Activated B cell treated with CpG ODN at 0.5 μM for 24 hours (primary cell): ENCODE measurements at regions of chr17 and their contacts with region 1.

Region 1: DNA sequence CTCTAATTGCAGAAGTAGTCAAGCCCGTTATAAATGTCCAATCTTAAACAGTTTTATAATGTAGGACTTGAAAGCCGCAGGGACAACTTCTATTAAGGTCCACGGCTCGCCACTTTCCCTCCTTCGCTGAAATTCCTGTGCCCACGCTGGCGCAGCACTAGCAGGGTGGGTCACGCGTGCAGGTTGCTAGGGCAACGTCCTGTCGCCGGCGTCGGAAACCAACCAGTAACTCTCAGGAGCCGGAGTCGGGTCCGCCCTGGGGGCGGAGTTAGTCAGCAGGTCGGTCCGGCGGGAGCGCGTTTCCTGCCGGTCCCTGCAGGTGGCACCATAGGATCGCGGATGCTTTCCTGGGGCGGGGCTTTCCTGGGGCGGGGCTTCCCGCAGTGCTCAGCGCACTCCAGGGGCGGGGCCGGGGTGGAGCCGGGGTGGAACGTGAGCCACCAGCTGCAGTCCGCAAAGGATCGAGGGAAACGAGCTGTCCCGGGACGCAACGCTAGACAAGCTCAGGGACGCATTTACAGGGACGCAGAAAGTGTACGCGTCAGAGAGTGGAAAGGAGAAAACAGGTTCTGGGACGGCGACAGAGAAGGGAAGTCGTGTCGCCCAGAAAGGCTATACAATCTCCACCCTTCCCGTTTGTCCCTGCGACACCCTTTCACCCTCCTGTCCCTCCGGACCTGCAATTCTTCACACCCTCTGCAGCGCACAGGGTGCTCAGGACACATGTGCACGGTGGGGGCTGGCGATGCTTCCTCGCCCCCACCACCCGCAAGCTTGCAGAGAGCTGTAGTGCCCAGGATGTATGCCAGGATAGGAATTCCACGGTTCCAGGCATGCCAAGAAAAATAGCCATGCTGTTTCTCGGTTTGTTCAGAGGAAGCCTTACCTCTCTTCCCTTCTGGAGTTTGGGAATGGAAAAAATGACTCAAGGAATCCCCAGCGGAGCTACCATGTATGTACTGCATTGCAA is 12.4 kb downstream of the COPZ2 start:
- DNase-seq: peak; percentile 91
- ATAC-seq: peak; percentile 89
- H3K4me3 Mint-ChIP-seq: peak overlapping the region; percentile 89
- H3K27ac Mint-ChIP-seq: peak overlapping the region; percentile 91
- H3K4me1 Mint-ChIP-seq: peaks cover 35% of the 10 kb centered on the region
- H3K27me3 Mint-ChIP-seq: peaks cover 9% of the 10 kb centered on the region
- CTCF ChIP-seq: no peak

Region 2: GRCh38 chr17:47810205-47810821 is 214.9 kb before region 1 on chr17:
- CTCF ChIA-PET with region 1: no interaction called
- POLR2A ChIA-PET with region 1: no interaction called
- intact Hi-C with region 1: no loop called
- DNase-seq: no peak
- ATAC-seq: peak; percentile 21
- H3K4me3 Mint-ChIP-seq: no peak overlapping the region
- H3K27ac Mint-ChIP-seq: no peak overlapping the region
- H3K4me1 Mint-ChIP-seq: no peaks in the 10 kb centered on the region
- H3K27me3 Mint-ChIP-seq: no peaks in the 10 kb centered on the region
- CTCF ChIP-seq: no peak

Region 3: GRCh38 chr17:47840740-47841603 is 184.2 kb before region 1 on chr17 and contains the start of gene SCRN2:
- CTCF ChIA-PET with region 1: no interaction called
- POLR2A ChIA-PET with region 1: no interaction called
- intact Hi-C with region 1: loop called (anchors 1 kb)
- DNase-seq: peak; percentile 91
- ATAC-seq: peak; percentile 94
- H3K4me3 Mint-ChIP-seq: peak within 1 kb of the TSS; percentile 98
- H3K27ac Mint-ChIP-seq: peak within 1 kb of the TSS; percentile 79
- H3K4me1 Mint-ChIP-seq: peaks cover 23% of the 10 kb centered on the region
- H3K27me3 Mint-ChIP-seq: peaks cover 16% of the 10 kb centered on the region
- CTCF ChIP-seq: peak; percentile 61
- total RNA-seq, gene SCRN2: 32.1 and 36.3 TPM in 2 replicates

Region 4: GRCh38 chr17:47978324-47978723 is 46.9 kb before region 1 on chr17:
- CTCF ChIA-PET with region 1: interaction called, 3 read pairs
- POLR2A ChIA-PET with region 1: no interaction called
- intact Hi-C with region 1: loop called (anchors 1 kb)
- DNase-seq: peak; percentile 26
- ATAC-seq: peak; percentile 97
- H3K4me3 Mint-ChIP-seq: no peak overlapping the region
- H3K27ac Mint-ChIP-seq: no peak overlapping the region
- H3K4me1 Mint-ChIP-seq: peaks cover 2% of the 10 kb centered on the region
- H3K27me3 Mint-ChIP-seq: no peaks in the 10 kb centered on the region
- CTCF ChIP-seq: no peak

Region 5: GRCh38 chr17:48054238-48055185 is 29.3 kb after region 1 on chr17:
- CTCF ChIA-PET with region 1: interaction called, 34 read pairs
- POLR2A ChIA-PET with region 1: interaction called, 37 read pairs
- intact Hi-C with region 1: no loop called
- DNase-seq: no peak
- ATAC-seq: no peak
- H3K4me3 Mint-ChIP-seq: peak overlapping the region; percentile 73
- H3K27ac Mint-ChIP-seq: peak overlapping the region; percentile 99
- H3K4me1 Mint-ChIP-seq: peaks cover 75% of the 10 kb centered on the region
- H3K27me3 Mint-ChIP-seq: no peaks in the 10 kb centered on the region
- CTCF ChIP-seq: no peak

Region 6: DNA sequence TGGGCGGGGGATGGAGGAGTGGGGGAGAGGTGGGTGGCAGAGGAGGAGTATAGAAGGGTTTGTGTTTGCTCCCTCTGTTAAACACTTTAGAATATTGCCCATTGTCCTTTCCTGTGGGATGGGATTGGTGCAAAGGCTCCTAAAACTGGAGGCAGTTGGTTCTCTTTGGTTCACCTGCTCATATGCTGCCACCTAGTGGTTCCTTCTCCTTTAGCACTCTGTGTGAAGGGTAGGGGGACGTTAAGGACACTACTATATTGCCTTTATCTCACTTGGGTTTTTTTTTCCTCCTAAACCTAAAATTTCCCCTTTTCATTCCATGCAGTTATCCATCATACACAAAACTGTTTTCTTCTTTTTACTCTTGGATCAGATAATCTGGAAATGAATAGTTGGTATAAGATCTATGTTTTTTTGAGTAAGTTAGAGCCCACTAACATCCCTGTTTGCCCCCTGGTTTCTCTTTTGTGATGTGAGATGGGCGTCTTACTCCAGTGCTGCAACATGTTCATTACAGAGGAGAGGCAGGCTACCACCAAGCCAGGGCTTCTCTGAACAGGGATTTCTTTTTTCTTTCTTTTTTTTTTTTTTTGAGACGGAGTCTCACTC is 106.1 kb after region 1 on chr17:
- CTCF ChIA-PET with region 1: interaction called, 35 read pairs
- POLR2A ChIA-PET with region 1: no interaction called
- intact Hi-C with region 1: loop called (anchors 1 kb)
- DNase-seq: no peak
- ATAC-seq: peak; percentile 83
- H3K4me3 Mint-ChIP-seq: no peak overlapping the region
- H3K27ac Mint-ChIP-seq: no peak overlapping the region
- H3K4me1 Mint-ChIP-seq: peaks cover 4% of the 10 kb centered on the region
- H3K27me3 Mint-ChIP-seq: no peaks in the 10 kb centered on the region
- CTCF ChIP-seq: no peak

Region 7: GRCh38 chr17:48457080-48457836 is 432.0 kb after region 1 on chr17:
- CTCF ChIA-PET with region 1: no interaction called
- POLR2A ChIA-PET with region 1: no interaction called
- intact Hi-C with region 1: loop called (anchors 10 kb)
- DNase-seq: peak; percentile 60
- ATAC-seq: peak; percentile 100
- H3K4me3 Mint-ChIP-seq: peak overlapping the region; percentile 50
- H3K27ac Mint-ChIP-seq: no peak overlapping the region
- H3K4me1 Mint-ChIP-seq: peaks cover 35% of the 10 kb centered on the region
- H3K27me3 Mint-ChIP-seq: peaks cover 5% of the 10 kb centered on the region
- CTCF ChIP-seq: peak; percentile 88

Region 8: DNA sequence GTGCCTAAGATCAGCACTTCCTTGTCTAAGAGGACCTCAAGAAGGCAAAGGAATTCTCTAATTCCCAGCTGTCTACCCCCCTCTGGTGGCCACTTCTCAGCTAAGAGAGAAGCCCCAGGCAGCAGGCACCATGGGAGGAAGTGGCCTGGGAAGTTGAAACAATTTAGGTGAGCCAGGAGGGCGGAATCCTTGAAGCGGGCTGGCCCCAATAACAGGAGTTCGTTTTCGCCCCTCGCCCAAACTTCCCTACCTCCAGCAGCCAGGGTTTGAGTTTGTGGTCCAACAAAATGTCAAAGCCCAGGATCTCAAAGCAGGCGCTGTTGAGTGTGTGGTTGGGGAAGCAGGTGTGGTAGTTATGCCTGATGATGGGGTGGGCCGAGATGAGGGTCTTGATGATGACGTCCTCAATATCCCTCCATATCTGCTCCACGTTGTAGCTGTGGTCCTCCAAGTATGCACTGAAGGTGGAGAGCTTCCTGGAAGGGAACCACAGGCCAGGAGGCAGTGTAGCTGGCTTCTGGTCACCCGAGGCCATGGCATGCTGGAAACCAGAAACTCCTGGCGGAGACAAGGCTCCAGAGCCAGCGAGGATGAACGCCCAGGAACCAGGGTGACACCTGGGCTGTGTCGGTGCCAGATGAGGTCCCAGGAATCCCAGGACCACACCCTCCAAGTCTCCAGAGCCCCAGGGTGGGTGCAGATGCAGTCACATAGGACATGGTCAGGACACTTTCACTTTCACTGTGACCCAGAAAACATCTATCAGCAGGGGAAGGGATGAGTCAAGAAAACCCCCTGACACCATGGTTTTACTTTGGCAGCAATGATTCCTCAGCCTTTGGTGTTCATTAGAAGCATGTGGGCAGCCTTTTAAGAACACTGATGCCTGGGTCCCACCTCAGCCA is 766.2 kb after region 1 on chr17:
- CTCF ChIA-PET with region 1: no interaction called
- POLR2A ChIA-PET with region 1: interaction called, 7 read pairs
- intact Hi-C with region 1: loop called (anchors 1 kb)
- DNase-seq: no peak
- ATAC-seq: peak; percentile 42
- H3K4me3 Mint-ChIP-seq: no peak overlapping the region
- H3K27ac Mint-ChIP-seq: no peak overlapping the region
- H3K4me1 Mint-ChIP-seq: peaks cover 5% of the 10 kb centered on the region
- H3K27me3 Mint-ChIP-seq: peaks cover 32% of the 10 kb centered on the region
- CTCF ChIP-seq: no peak